ENCODE measurements at regions of chr3 and their contacts with region 1.

Region 1: DNA sequence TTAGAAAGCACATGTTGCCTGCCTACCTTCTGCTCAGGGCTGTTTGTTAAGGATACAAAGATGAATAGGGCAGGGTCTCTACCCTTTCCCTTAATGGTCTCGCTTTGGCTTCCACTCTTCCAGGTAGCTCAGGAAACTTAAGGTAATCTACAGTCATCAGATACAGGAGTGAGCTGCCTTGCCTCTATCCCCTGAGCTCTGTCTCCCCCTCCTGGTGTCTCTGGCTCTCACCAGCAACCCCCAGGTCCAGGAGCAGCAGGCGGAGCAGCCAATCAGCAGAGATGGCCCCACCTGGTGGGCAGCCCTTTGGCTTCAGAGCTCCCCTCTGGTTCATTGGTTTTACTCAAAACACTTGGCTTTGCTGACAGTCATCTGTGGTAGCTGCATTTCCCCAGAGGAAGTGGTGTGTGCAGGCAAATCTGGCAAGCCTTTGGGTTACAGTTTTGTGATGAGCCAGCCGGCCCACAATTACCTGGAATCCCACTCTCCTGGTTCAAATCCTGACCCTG is 8.5 kb upstream of the CX3CR1 start:
- DNase-seq: peak; percentile 95
- ATAC-seq: peak; percentile 97
- H3K4me3 ChIP-seq: no peak overlapping the region
- H3K27ac ChIP-seq: no peak overlapping the region
- H3K4me1 ChIP-seq: peaks cover 17% of the 10 kb centered on the region
- H3K27me3 ChIP-seq: no peaks in the 10 kb centered on the region
- CTCF ChIP-seq: peak; percentile 93 to 99 (median 99); a peak in 5 of 6 replicates
- EP300 ChIP-seq: peak in 1 of 2 experiments; percentile 65; a peak in 2 of 4 replicates
- POLR2A ChIP-seq: no peak
- RAD21 ChIP-seq: peak; percentile 99

Region 2: DNA sequence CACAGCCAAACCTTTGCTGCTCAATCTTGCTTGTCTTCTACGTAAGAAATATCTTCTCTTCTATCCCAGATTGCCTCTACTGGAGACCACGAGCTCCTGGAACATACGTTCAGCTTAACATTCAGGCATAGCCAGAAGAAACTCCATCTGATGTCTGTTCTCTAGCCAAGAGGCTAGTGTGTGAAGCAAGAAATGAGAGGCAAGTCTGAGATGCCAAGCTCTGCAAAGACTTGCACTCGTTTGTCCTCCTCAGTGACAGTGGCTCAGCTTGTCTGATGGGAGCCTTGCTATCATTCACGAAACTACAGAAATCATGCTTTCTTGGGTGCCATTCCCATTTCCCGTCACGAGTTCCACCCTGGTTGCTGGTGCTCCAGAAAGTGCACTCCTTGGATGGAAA is 472.3 kb before region 1 on chr3 and contains the start of gene SCN10A:
- CTCF ChIA-PET with region 1: no interaction called
- POLR2A ChIA-PET with region 1: no interaction called
- RAD21 ChIA-PET with region 1: no interaction called
- SMC1A ChIA-PET with region 1: no interaction called
- in situ Hi-C with region 1: no loop called
- intact Hi-C with region 1: no loop called
- DNase-seq: no peak
- ATAC-seq: no peak
- H3K4me3 ChIP-seq: no peak within 1 kb of the TSS
- H3K27ac ChIP-seq: no peak within 1 kb of the TSS
- H3K4me1 ChIP-seq: no peaks in the 10 kb centered on the region
- H3K27me3 ChIP-seq: no peaks in the 10 kb centered on the region; a peak in 1 of 4 replicates
- CTCF ChIP-seq: no peak
- EP300 ChIP-seq: no peak
- POLR2A ChIP-seq: no peak
- RAD21 ChIP-seq: no peak
- polyA plus RNA-seq, gene SCN10A: not detected

Region 3: GRCh38 chr3:39000008-39000450 is 288.3 kb before region 1 on chr3:
- CTCF ChIA-PET with region 1: interaction called, 21 read pairs
- POLR2A ChIA-PET with region 1: no interaction called
- RAD21 ChIA-PET with region 1: interaction called, 24 read pairs
- SMC1A ChIA-PET with region 1: interaction called, 19 read pairs
- in situ Hi-C with region 1: no loop called
- intact Hi-C with region 1: no loop called
- DNase-seq: peak; percentile 35
- ATAC-seq: peak; percentile 96
- H3K4me3 ChIP-seq: no peak overlapping the region
- H3K27ac ChIP-seq: no peak overlapping the region
- H3K4me1 ChIP-seq: no peaks in the 10 kb centered on the region
- H3K27me3 ChIP-seq: no peaks in the 10 kb centered on the region
- CTCF ChIP-seq: peak; percentile 79 to 95 (median 93)
- EP300 ChIP-seq: no peak
- POLR2A ChIP-seq: no peak
- RAD21 ChIP-seq: peak; percentile 79

Region 4: GRCh38 chr3:39107388-39108199 is 180.8 kb before region 1 on chr3 and contains the starts of genes GORASP1 and TTC21A:
- CTCF ChIA-PET with region 1: interaction called, 39 read pairs
- POLR2A ChIA-PET with region 1: interaction called, 3 read pairs
- RAD21 ChIA-PET with region 1: interaction called, 25 read pairs
- SMC1A ChIA-PET with region 1: interaction called, 12 read pairs
- in situ Hi-C with region 1: loop called (anchors 5 kb)
- intact Hi-C with region 1: no loop called
- DNase-seq: no peak
- ATAC-seq: peak; percentile 75
- H3K4me3 ChIP-seq: peak within 1 kb of the TSS; percentile 91
- H3K27ac ChIP-seq: peak within 1 kb of the TSS; percentile 59
- H3K4me1 ChIP-seq: peaks cover 27% of the 10 kb centered on the region
- H3K27me3 ChIP-seq: no peaks in the 10 kb centered on the region
- CTCF ChIP-seq: no peak
- EP300 ChIP-seq: no peak
- POLR2A ChIP-seq: peak; percentile 60
- RAD21 ChIP-seq: no peak
- polyA plus RNA-seq, gene GORASP1: 3.6 to 5.0 TPM
- polyA plus RNA-seq, gene TTC21A: 0.62 to 0.68 TPM

Region 5: GRCh38 chr3:39189959-39190269 is 98.4 kb before region 1 on chr3:
- CTCF ChIA-PET with region 1: interaction called, 756 read pairs
- POLR2A ChIA-PET with region 1: interaction called, 18 read pairs
- RAD21 ChIA-PET with region 1: interaction called, 456 read pairs
- SMC1A ChIA-PET with region 1: interaction called, 648 read pairs
- in situ Hi-C with region 1: loop called (anchors 5 kb)
- intact Hi-C with region 1: loop called (anchors 1 kb)
- DNase-seq: peak; percentile 35
- ATAC-seq: peak; percentile 83
- H3K4me3 ChIP-seq: no peak overlapping the region
- H3K27ac ChIP-seq: no peak overlapping the region
- H3K4me1 ChIP-seq: peaks cover 3% of the 10 kb centered on the region
- H3K27me3 ChIP-seq: no peaks in the 10 kb centered on the region
- CTCF ChIP-seq: peak; percentile 69 to 86 (median 82)
- EP300 ChIP-seq: no peak
- POLR2A ChIP-seq: no peak
- RAD21 ChIP-seq: peak; percentile 91

Region 6: GRCh38 chr3:39249453-39250115 is 38.8 kb before region 1 on chr3:
- CTCF ChIA-PET with region 1: interaction called, 49 read pairs
- POLR2A ChIA-PET with region 1: no interaction called
- RAD21 ChIA-PET with region 1: interaction called, 12 read pairs
- SMC1A ChIA-PET with region 1: interaction called, 25 read pairs
- in situ Hi-C with region 1: no loop called
- intact Hi-C with region 1: no loop called
- DNase-seq: no peak
- ATAC-seq: peak; percentile 84
- H3K4me3 ChIP-seq: no peak overlapping the region
- H3K27ac ChIP-seq: no peak overlapping the region
- H3K4me1 ChIP-seq: peaks cover 7% of the 10 kb centered on the region; the same call in 1 of the 2 replicates
- H3K27me3 ChIP-seq: no peaks in the 10 kb centered on the region
- CTCF ChIP-seq: no peak
- EP300 ChIP-seq: no peak
- POLR2A ChIP-seq: no peak
- RAD21 ChIP-seq: no peak

Region 7: GRCh38 chr3:39317571-39318169 is 29.3 kb after region 1 on chr3:
- CTCF ChIA-PET with region 1: interaction called, 43 read pairs
- POLR2A ChIA-PET with region 1: no interaction called
- RAD21 ChIA-PET with region 1: interaction called, 9 read pairs
- SMC1A ChIA-PET with region 1: interaction called, 7 read pairs
- in situ Hi-C with region 1: no loop called
- intact Hi-C with region 1: no loop called
- DNase-seq: no peak
- ATAC-seq: peak; percentile 77
- H3K4me3 ChIP-seq: no peak overlapping the region
- H3K27ac ChIP-seq: no peak overlapping the region
- H3K4me1 ChIP-seq: 0 out of 2 replicates have a peak, but pooled peaks cover 3% of the 10 kb centered on the region
- H3K27me3 ChIP-seq: no peaks in the 10 kb centered on the region
- CTCF ChIP-seq: no peak
- EP300 ChIP-seq: no peak
- POLR2A ChIP-seq: no peak
- RAD21 ChIP-seq: no peak

Region 8: DNA sequence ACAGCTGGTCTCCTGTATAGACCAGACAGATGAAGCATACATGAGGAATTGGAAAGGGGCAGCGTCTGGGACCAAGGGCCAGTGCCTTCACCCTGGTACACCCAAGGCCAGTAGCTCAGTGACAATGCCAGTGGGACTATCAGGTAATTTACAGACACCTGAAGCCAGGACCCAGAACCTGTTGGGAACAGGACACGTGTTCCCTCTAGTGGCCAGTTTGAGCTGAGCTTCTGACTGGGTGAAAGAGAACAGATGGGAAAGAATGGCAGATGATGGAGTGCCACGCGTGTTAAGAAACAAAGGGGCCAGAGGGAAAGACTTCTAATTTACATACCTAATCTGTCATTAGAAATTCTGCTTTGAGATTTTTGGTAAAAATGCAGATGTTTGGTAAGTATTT is 89.7 kb after region 1 on chr3:
- CTCF ChIA-PET with region 1: interaction called, 323 read pairs
- POLR2A ChIA-PET with region 1: interaction called, 11 read pairs
- RAD21 ChIA-PET with region 1: interaction called, 232 read pairs
- SMC1A ChIA-PET with region 1: interaction called, 234 read pairs
- in situ Hi-C with region 1: no loop called
- intact Hi-C with region 1: loop called (anchors 1 kb)
- DNase-seq: no peak
- ATAC-seq: peak; percentile 92
- H3K4me3 ChIP-seq: no peak overlapping the region
- H3K27ac ChIP-seq: no peak overlapping the region; the same call in 1 of the 2 replicates
- H3K4me1 ChIP-seq: peaks cover 14% of the 10 kb centered on the region
- H3K27me3 ChIP-seq: no peaks in the 10 kb centered on the region
- CTCF ChIP-seq: peak; percentile 84 to 92 (median 91); a peak in 5 of 6 replicates
- EP300 ChIP-seq: no peak
- POLR2A ChIP-seq: no peak
- RAD21 ChIP-seq: peak; percentile 96

Region 9: GRCh38 chr3:39515681-39516441 is 227.5 kb after region 1 on chr3:
- CTCF ChIA-PET with region 1: no interaction called
- POLR2A ChIA-PET with region 1: no interaction called
- RAD21 ChIA-PET with region 1: no interaction called
- SMC1A ChIA-PET with region 1: no interaction called
- in situ Hi-C with region 1: no loop called
- intact Hi-C with region 1: no loop called
- DNase-seq: no peak
- ATAC-seq: no peak
- H3K4me3 ChIP-seq: no peak overlapping the region
- H3K27ac ChIP-seq: no peak overlapping the region
- H3K4me1 ChIP-seq: no peaks in the 10 kb centered on the region
- H3K27me3 ChIP-seq: no peaks in the 10 kb centered on the region; a peak in 2 of 4 replicates
- CTCF ChIP-seq: no peak
- EP300 ChIP-seq: no peak
- POLR2A ChIP-seq: no peak
- RAD21 ChIP-seq: no peak

Measured in GM12878 (cell line).